ENCODE measurements at regions of chr1 and their contacts with region 1.

Region 1: GRCh38 chr1:186948535-186948934 is 119.8 kb downstream of the PLA2G4A start:
- DNase-seq: no peak
- ATAC-seq: no peak
- H3K4me3 ChIP-seq: no peak overlapping the region
- H3K4me3 Mint-ChIP-seq: no peak overlapping the region
- H3K27ac ChIP-seq: no peak overlapping the region
- H3K27ac Mint-ChIP-seq: no peak overlapping the region
- H3K4me1 ChIP-seq: no peaks in the 10 kb centered on the region
- H3K4me1 Mint-ChIP-seq: no peaks in the 10 kb centered on the region
- H3K27me3 ChIP-seq: no peaks in the 10 kb centered on the region
- H3K27me3 Mint-ChIP-seq: no peaks in the 10 kb centered on the region
- CTCF ChIP-seq: no peak

Region 2: DNA sequence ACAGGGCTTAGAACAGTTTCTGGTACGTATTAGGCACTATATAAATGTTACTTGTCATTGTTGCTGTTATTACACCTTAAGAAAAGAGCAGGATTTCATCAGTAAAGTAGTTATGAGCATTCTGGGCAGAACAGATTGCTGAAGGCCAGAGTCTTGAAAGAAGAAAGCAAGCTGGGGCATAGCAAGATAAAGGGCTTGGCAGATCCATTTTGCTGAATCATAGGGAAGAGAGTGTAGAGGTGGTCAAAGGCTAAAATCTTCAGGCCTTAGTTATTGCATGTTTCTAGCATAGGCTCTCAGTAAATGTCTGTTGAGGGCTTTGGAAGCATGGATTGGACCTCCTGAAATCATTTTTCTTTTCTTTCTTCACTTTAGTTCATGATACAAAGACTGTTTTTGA is 52.3 kb before region 1 on chr1:
- CTCF ChIA-PET with region 1: no interaction called
- POLR2A ChIA-PET with region 1: no interaction called
- intact Hi-C with region 1: no loop called
- DNase-seq: no peak
- ATAC-seq: no peak
- H3K4me3 ChIP-seq: no peak overlapping the region
- H3K4me3 Mint-ChIP-seq: no peak overlapping the region
- H3K27ac ChIP-seq: no peak overlapping the region
- H3K27ac Mint-ChIP-seq: no peak overlapping the region
- H3K4me1 ChIP-seq: no peaks in the 10 kb centered on the region
- H3K4me1 Mint-ChIP-seq: no peaks in the 10 kb centered on the region
- H3K27me3 ChIP-seq: no peaks in the 10 kb centered on the region
- H3K27me3 Mint-ChIP-seq: no peaks in the 10 kb centered on the region
- CTCF ChIP-seq: no peak

Region 3: GRCh38 chr1:187091666-187092065 is 143.1 kb after region 1 on chr1:
- CTCF ChIA-PET with region 1: no interaction called
- POLR2A ChIA-PET with region 1: no interaction called
- intact Hi-C with region 1: no loop called
- DNase-seq: no peak
- ATAC-seq: no peak
- H3K4me3 ChIP-seq: no peak overlapping the region
- H3K4me3 Mint-ChIP-seq: no peak overlapping the region
- H3K27ac ChIP-seq: no peak overlapping the region
- H3K27ac Mint-ChIP-seq: no peak overlapping the region
- H3K4me1 ChIP-seq: peaks cover 7% of the 10 kb centered on the region
- H3K4me1 Mint-ChIP-seq: peaks cover 23% of the 10 kb centered on the region
- H3K27me3 ChIP-seq: no peaks in the 10 kb centered on the region
- H3K27me3 Mint-ChIP-seq: no peaks in the 10 kb centered on the region
- CTCF ChIP-seq: no peak

Region 4: DNA sequence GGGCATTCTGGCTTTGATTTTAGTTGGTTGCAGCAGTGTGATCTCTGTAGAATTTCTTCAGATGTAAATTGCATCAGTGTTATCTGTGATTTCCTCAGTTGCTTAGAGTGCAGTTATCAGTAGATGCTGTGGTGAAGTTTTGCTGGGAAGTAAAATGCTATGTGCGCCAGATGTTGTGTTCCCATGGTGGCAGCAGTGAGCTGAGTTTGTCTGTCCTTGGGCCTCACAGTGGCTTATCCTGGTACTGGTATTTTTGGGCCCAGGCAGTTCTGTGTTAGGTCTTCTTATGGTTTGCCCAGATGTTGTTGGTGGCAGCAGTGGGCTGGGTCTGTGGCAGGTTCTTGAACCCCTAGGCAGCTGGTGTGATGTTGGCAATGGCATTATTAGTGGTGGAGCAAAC is 1122.3 kb after region 1 on chr1:
- CTCF ChIA-PET with region 1: no interaction called
- POLR2A ChIA-PET with region 1: no interaction called
- intact Hi-C with region 1: loop called in 1 of 2 experiments (anchors 10 kb)
- DNase-seq: no peak
- ATAC-seq: no peak
- H3K4me3 ChIP-seq: no peak overlapping the region
- H3K4me3 Mint-ChIP-seq: no peak overlapping the region
- H3K27ac ChIP-seq: no peak overlapping the region
- H3K27ac Mint-ChIP-seq: no peak overlapping the region
- H3K4me1 ChIP-seq: no peaks in the 10 kb centered on the region
- H3K4me1 Mint-ChIP-seq: no peaks in the 10 kb centered on the region
- H3K27me3 ChIP-seq: no peaks in the 10 kb centered on the region
- H3K27me3 Mint-ChIP-seq: no peaks in the 10 kb centered on the region
- CTCF ChIP-seq: no peak